ENCODE measurements at regions of chr1 and their contacts with region 1.

Region 1: DNA sequence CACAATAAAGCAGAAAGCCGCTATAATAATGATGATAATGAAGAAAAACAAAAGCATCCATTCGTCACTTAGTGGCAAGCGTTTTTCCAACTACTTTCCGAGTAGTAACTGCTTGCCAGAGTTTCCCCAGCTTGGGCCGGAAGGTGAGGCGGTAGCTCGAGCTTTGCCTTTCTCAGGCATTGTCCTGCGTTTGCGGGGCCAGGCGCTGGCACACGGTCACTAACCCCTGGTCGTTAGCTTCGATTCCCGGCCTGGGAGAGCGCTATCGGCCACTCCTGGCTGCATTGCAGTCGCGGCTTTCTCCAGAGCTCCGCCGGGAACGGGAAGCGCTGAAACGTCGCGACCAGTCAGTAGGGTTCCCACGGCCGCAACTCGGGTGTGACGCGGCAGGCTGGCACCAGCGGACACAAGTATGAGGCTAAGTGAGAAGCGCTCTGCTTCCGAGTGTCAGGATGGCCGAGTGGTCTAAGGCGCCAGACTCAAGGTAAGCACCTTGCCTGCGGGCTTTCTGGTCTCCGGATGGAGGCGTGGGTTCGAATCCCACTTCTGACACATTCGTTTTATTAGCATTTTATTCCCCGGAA is 14.6 kb upstream of the ZNF692 start:
- DNase-seq: peak; percentile 97
- H3K4me3 Mint-ChIP-seq: peak overlapping the region; percentile 96
- H3K27ac Mint-ChIP-seq: peak overlapping the region; percentile 95
- H3K4me1 Mint-ChIP-seq: peaks cover 19% of the 10 kb centered on the region
- H3K27me3 Mint-ChIP-seq: peaks cover 14% of the 10 kb centered on the region

Region 2: DNA sequence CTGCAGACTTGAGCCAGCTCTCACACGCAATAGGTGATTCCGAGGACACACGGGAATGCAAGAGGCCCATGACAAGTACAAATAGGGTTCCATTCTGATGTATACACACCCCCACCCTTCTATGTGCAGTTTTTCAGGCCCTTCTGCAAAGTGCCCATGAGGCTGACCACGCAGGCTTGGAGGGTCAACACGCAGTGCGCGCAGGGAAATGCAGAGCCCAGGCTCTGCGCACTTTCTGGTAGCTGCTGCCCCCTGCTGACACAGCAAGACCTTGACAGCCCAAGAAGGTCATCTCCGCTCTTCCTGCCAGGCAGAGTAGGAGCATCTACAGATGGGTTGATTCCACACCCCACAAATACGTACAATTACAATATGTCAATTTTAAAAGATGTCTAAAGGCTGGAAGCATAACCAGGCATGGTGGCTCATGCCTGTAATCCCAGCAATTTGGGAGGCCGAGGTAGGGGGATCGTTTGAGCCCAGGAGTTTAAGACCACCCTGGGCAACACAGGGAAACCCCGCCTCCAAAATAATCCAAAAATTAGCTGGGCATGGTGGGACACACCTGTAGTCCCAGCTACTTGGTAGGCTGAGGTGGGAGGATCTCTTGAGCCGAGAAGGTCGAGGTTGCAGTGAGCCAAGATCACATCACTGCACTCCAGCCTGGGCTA is 66.3 kb before region 1 on chr1:
- intact Hi-C with region 1: no loop called
- DNase-seq: peak; percentile 85
- H3K4me3 Mint-ChIP-seq: no peak overlapping the region
- H3K27ac Mint-ChIP-seq: no peak overlapping the region
- H3K4me1 Mint-ChIP-seq: peaks cover 11% of the 10 kb centered on the region
- H3K27me3 Mint-ChIP-seq: peaks cover 2% of the 10 kb centered on the region

Region 3: DNA sequence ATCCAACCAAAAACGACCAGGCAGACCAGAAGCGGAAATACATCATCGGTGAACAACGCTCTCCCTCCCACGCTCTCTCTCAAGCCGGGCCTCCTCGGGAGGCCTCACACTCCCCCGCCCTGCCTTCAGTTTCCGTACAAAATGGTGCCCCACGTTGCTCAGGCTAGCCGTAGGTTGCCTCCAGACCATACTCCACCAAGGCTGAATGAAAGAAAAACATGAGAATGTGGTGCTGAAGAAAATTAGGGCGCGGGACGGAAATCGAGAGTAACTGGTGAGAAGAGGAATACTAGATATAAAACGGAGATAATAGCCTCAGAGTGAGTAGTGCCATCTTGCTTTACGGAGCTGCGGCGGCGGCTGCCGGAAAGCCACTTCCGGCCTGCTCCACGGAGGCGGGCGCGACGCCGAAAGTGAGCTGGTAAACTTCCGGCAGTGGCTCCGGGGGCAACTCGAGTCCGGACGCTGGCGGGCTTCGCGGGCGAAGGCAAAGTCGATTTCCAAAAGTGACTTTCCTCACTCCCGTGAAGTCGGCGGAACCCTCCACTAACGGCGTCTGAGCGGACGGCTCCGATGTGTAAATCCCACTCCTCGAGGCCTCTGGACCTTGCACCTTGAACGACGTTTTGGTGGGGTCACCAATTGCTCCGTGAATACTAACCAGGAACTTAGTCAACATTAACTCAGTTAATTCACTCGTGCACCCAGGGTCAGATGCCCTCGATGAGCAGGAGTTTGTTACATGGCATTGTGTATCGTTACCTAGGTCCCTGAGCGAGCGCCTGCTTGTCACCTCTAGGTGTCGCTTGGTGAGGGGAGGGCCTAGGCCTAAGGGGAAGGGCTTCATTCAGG is 47.4 kb before region 1 on chr1 and contains the start of gene SH3BP5L:
- intact Hi-C with region 1: loop called (anchors 1 kb)
- DNase-seq: peak; percentile 97
- H3K4me3 Mint-ChIP-seq: peak within 1 kb of the TSS; percentile 93
- H3K27ac Mint-ChIP-seq: peak within 1 kb of the TSS; percentile 100
- H3K4me1 Mint-ChIP-seq: peaks cover 45% of the 10 kb centered on the region
- H3K27me3 Mint-ChIP-seq: peaks cover 5% of the 10 kb centered on the region
- total RNA-seq, gene SH3BP5L: 27.5 and 28.2 TPM in 2 replicates

Region 4: GRCh38 chr1:248837794-248838356 is 35.6 kb before region 1 on chr1 and contains the start of gene ZNF672:
- intact Hi-C with region 1: loop called (anchors 1 kb)
- DNase-seq: peak; percentile 99
- H3K4me3 Mint-ChIP-seq: no peak within 1 kb of the TSS
- H3K27ac Mint-ChIP-seq: no peak within 1 kb of the TSS
- H3K4me1 Mint-ChIP-seq: peaks cover 28% of the 10 kb centered on the region
- H3K27me3 Mint-ChIP-seq: peaks cover 2% of the 10 kb centered on the region
- total RNA-seq, gene ZNF672: 44.0 and 48.8 TPM in 2 replicates

Region 5: DNA sequence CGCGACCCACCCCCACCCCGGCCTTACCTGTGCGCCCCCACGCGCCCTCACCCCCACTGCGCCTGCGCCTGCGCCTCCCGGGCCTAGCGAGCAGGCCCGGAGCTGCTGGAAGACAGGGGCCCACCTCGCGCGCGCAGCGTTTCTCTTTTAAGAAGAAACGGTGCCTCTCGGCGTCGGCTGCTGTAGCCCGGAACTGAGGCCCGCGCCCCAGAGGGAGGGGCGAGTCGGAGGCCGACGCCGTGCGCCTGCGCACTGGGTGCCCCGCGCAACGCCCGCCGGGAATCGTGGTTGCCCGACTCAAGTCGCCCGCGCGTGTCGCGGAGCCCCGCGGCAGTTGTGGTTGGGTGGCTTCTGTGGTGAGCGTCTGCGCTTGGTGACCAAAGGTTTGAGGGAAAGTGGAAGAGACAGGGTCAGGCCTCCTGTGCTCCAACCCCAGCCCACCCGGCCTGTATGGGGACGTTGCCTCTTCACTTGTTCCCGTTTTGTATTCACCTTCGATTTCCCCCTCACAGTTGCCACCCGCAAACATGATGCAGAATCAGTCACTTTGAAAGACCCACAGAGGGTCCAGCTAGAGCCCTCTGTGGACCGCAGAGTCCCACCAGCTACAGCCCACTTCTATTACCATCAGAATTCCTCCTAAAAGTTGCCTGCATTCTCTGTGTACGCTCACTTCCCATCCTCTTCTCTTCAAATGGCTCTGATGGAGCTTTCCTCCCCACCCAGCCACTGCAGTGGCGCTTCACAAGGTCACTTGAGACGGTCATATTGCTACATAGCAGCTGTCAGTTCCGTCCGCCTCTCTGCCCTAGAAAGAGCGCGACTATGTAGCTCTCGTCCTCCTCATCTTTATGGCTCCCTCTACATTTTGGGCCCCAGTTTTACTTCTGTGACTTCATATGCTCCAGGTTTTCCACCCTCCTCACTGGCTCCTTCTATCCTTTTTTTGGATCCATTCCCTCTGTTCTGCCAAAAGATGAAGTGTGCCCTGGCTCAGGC is 14.3 kb before region 1 on chr1 and contains the start of gene ZNF692:
- intact Hi-C with region 1: loop called (anchors 1 kb)
- DNase-seq: peak; percentile 99
- H3K4me3 Mint-ChIP-seq: peak within 1 kb of the TSS; percentile 96
- H3K27ac Mint-ChIP-seq: peak within 1 kb of the TSS; percentile 98
- H3K4me1 Mint-ChIP-seq: peaks cover 51% of the 10 kb centered on the region
- H3K27me3 Mint-ChIP-seq: no peaks in the 10 kb centered on the region
- total RNA-seq, gene ZNF692: 94.9 and 100 TPM in 2 replicates